Panc1 (cell line): ENCODE measurements at regions of chr10 and their contacts with region 1.

Region 1: DNA sequence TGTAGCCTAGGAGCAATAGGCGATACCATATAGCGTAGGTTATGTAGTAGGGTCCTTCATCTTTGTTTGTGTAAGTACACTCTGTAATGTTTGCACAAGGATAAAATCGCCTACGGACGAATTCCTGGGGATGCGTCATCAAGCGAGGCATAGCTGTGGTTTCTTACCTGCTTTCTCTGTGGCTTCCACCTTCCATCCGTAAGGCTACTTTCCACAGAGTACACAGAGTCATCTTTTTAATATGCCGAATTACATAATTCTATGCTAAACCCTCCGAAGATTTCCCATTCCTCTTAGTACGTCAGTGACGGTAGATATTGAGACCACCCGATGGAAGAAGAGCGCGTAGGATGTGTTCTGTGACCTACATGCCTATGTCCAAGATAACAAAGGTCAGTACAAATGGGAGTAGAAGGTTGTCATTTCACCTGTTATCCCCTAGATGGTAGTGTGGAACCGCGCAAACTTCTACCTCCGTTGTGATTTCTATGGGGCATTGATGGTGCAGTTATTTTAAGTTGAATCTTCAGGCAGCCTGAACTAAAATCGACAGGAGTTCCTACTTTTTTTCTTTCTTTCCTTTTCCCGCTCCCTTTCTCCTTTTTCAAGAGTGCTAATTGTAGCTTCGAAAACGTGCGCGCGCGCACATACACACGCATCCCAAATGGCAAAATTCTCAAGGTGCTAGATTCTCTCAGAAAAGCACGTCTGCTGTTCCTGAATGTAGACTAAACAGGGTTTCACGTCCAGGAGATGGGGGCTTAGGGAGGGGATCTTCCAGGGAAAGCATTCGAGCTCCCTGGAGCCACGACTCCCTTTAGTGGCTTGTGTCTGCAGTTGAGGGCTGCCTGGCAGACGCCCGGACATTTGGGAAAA is 111.7 kb upstream of the MBL2 start:
- DNase-seq: peak; percentile 61
- ATAC-seq: peak; percentile 96
- H3K4me3 ChIP-seq: peak overlapping the region; percentile 17 to 40; a peak in 3 of 4 replicates
- H3K27ac ChIP-seq: peak overlapping the region; percentile 74
- H3K4me1 ChIP-seq: peaks cover 7% of the 10 kb centered on the region
- H3K27me3 ChIP-seq: no peaks in the 10 kb centered on the region
- CTCF ChIP-seq: peak; percentile 93

Region 2: DNA sequence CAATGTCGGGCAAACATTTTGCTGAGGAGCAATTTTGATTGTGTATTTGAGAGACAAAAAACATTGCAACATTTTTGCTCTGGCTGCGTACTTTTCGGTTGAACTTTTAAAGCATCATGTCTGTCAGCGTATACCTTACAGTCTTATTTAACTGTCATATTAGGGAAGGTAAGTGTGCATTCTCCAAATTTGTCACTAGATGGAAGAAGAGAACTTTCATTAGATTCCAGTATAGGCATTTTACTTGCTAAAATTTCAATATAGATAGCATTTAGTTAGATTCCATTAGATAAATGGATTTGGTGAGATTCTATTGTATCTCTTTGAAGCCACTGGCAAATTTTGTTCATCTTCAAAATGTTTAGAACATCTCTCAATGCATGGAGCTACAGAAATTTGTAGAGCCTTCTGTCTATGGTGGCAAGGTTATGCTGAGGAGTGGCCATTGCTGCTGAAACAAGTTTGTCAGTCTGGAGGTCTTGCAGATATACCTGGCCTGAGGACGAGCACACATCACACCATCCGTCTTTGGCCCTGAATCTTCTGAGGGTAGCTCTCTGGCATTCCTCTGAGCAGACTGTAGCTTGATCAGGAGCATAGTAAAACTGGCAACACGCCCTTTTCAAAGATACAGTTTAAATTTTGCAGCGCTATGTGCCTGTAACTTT is 325.8 kb after region 1 on chr10:
- CTCF ChIA-PET with region 1: no interaction called
- POLR2A ChIA-PET with region 1: no interaction called
- in situ Hi-C with region 1: no loop called
- intact Hi-C with region 1: loop called (anchors 10 kb)
- DNase-seq: no peak
- ATAC-seq: peak; percentile 83
- H3K4me3 ChIP-seq: no peak overlapping the region
- H3K27ac ChIP-seq: no peak overlapping the region
- H3K4me1 ChIP-seq: no peaks in the 10 kb centered on the region
- H3K27me3 ChIP-seq: no peaks in the 10 kb centered on the region
- CTCF ChIP-seq: peak; percentile 56; the same call in 1 of the 2 replicates